ENCODE measurements at regions of chr1 and their contacts with region 1.

Region 1: DNA sequence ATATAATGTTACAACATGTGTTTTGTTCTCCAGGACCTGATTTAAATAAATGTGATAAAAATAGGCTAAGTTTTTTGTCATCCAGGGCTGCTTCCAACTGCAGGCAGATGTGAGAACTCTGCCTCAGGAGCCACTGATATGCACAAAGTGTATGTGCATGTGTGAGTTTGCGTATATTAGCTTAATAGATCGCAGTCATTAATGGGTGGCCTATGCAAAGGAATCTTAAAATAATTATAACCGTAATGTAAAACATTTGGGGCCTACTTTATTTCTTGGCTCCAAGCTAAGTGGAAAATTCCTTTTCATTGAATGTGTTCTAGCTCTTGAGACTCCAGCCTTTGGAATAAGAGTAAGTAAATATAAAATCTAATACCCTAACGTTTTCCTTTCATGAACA is 16.8 kb downstream of the DHX9 start:
- DNase-seq: no peak
- ATAC-seq: no peak
- H3K4me3 ChIP-seq: no peak overlapping the region
- H3K27ac ChIP-seq: no peak overlapping the region
- H3K4me1 ChIP-seq: no peaks in the 10 kb centered on the region
- H3K27me3 ChIP-seq: no peaks in the 10 kb centered on the region
- CTCF ChIP-seq: no peak
- EP300 ChIP-seq: no peak
- POLR2A ChIP-seq: no peak
- RAD21 ChIP-seq: no peak

Region 2: DNA sequence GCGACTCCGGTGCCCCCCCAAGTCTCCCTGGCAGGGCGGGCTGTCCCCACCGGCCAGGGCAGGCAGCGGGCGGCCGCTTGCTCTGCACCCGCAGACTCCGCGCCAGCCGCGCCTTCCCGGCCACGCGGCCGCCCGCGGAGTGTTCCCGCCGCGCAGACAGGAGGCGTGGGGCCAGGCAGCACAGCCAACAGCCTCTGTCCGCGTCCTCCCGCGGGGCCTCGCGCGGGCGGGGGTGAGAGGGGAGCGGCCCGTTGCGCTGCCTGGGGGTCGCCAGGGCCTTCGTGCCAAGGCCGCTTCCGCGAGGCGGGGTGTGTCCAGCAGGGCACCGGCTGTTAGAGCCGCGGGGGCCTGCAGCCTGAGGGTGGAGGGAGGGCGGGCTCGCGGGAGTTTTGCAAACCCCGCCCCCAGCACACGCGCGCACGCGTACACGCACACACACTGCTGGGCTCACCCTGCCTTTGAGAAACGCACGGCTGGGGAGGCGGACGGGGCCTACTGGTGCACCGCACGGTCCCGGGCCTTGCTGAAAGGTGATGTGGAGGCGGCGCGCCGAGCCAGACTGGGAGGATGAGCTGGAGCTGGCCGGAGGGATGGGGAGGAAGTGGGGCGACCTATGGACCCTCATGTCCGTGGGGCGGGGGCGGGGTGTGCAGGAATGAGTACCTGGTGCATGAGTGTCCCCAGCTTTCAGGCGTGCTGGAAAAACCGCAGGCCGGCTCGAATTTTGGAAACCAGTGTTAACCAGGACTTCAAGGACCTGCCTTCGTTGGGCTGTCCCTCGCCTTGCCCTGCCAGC is 1901.7 kb before region 1 on chr1:
- CTCF ChIA-PET with region 1: no interaction called
- POLR2A ChIA-PET with region 1: no interaction called
- in situ Hi-C with region 1: no loop called
- intact Hi-C with region 1: no loop called
- DNase-seq: peak in 1 of 4 experiments; percentile 6
- ATAC-seq: no peak
- H3K4me3 ChIP-seq: no peak overlapping the region
- H3K27ac ChIP-seq: no peak overlapping the region
- H3K4me1 ChIP-seq: peaks cover 0 to 20% of the 10 kb centered on the region in 2 experiments; a peak in 3 of 5 replicates
- H3K27me3 ChIP-seq: no peaks in the 10 kb centered on the region
- CTCF ChIP-seq: no peak
- EP300 ChIP-seq: no peak
- POLR2A ChIP-seq: no peak
- RAD21 ChIP-seq: no peak

Region 3: GRCh38 chr1:182575539-182576149 is 280.3 kb before region 1 on chr1:
- CTCF ChIA-PET with region 1: no interaction called
- POLR2A ChIA-PET with region 1: no interaction called
- in situ Hi-C with region 1: no loop called
- intact Hi-C with region 1: no loop called
- DNase-seq: peak in 1 of 4 experiments; percentile 33
- ATAC-seq: peak; percentile 70
- H3K4me3 ChIP-seq: no peak overlapping the region
- H3K27ac ChIP-seq: no peak overlapping the region
- H3K4me1 ChIP-seq: peaks cover 0 to 8% of the 10 kb centered on the region in 2 experiments; a peak in 2 of 5 replicates
- H3K27me3 ChIP-seq: no peaks in the 10 kb centered on the region; a peak in 1 of 5 replicates
- CTCF ChIP-seq: no peak
- EP300 ChIP-seq: no peak
- POLR2A ChIP-seq: no peak
- RAD21 ChIP-seq: no peak

Region 4: DNA sequence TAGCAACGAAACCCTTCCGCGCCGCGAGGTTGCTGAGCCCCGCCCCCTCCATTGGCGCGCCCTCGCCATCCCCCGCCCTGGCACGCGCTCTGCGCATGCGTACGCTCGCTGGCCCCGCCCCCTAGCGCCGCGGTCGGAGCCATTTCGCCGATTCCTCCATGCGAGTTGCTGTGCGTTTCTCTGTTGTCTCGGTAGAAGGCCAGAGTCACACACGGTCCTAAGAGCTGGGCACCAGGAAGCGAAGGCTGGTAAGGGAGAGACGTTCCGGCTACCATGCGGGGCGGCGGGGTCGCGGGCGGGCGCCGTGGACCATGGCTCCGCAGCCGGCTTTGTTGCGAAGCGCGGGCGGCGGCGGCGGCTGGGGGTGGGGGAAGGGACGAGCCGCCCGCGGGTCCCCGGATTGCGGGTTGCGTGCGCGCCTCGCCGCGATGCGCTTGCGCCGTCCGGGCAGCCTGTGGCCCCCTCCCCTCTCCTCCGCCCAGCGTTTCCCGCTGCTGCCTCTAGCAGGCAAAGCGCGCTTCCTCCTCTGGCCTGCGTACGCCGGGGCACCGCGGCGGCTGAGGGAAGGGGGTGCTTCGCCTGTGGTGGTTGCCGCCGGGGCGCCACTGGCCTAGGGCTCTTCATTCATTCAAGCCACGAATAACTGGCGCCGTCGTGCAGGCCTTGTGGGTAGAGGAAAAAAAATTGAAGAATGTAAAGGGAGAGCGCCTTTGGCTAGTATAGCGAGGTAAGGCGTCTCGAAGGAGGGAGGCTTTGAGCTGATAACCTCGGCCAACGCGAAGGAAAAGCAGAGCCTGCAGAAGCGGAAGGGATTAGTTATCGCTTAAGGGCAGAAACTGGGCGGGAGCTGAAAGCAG is 16.5 kb before region 1 on chr1 and contains the start of gene DHX9:
- CTCF ChIA-PET with region 1: no interaction called
- POLR2A ChIA-PET with region 1: interaction called, 14 read pairs
- in situ Hi-C with region 1: no loop called
- intact Hi-C with region 1: no loop called
- DNase-seq: peak; percentile 96 to 99 (median 99)
- ATAC-seq: peak; percentile 90
- H3K4me3 ChIP-seq: peak within 1 kb of the TSS; percentile 77
- H3K27ac ChIP-seq: peak within 1 kb of the TSS; percentile 98
- H3K4me1 ChIP-seq: peaks cover 11 to 12% of the 10 kb centered on the region in 2 experiments
- H3K27me3 ChIP-seq: no peaks in the 10 kb centered on the region
- CTCF ChIP-seq: peak in 2 of 3 experiments; percentile 7 to 48; a peak in 2 of 6 replicates
- EP300 ChIP-seq: peak; percentile 82
- POLR2A ChIP-seq: peak; percentile 99
- RAD21 ChIP-seq: peak in 1 of 2 experiments; percentile 10; a peak in 1 of 4 replicates
- polyA plus RNA-seq, gene DHX9: 100 to 246 TPM

Region 5: GRCh38 chr1:183070923-183071618 is 215.2 kb after region 1 on chr1:
- CTCF ChIA-PET with region 1: no interaction called
- POLR2A ChIA-PET with region 1: no interaction called
- in situ Hi-C with region 1: no loop called
- intact Hi-C with region 1: no loop called
- DNase-seq: no peak
- ATAC-seq: no peak
- H3K4me3 ChIP-seq: no peak overlapping the region
- H3K27ac ChIP-seq: no peak overlapping the region
- H3K4me1 ChIP-seq: no peaks in the 10 kb centered on the region
- H3K27me3 ChIP-seq: 0 out of 5 replicates have a peak, but pooled peaks cover 0 to 2% of the 10 kb centered on the region in 2 experiments
- CTCF ChIP-seq: no peak
- EP300 ChIP-seq: no peak
- POLR2A ChIP-seq: no peak
- RAD21 ChIP-seq: no peak

Measured in K562 (cell line).